PC-3 (cell line): ENCODE measurements at regions of chr17 and their contacts with region 1.

Region 1: DNA sequence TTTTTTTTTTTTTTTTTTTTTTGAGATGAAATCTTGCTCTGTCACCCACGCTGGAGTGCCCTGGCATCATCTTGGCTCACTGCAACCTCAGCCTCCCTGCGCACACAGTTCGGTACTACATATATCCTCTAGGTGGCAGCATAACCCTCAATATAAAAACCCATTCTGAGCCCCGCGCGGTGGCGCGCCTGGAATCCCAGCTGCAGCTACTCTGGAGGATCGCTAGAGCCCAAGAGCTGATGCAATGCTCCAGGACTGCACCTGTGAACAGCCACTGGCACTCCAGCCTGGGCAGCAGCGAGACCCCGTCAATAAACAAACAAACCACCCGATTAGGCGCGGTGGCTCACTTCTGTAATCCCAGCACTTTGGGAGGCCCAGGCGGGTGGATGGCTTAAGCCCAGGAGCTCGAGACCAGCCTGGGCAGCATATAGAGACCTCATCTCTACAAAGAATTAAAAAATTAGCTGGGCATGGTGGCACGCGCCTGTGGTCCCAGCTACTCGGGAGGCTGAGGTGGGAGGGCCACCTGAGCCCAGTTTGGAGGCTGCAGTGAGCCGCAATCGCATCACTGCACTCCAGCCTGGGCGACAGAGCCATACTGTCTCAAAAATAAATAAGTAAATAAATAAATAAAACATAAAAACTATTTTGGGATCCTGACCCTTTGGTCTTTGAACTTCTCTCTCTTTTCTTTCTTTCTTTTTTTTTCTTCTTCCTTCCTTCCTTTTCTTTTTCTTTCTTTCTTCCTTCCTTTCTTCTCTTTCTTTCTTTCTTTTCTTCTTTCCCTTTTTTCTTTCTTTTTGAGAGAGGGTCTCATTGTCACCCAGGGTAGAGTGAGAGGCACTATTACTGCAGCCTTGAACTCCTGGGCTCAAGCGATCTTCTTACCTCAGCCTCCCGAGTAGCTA is 15.4 kb upstream of the AKAP10 start:
- DNase-seq: peak; percentile 97
- ATAC-seq: peak; percentile 99
- H3K4me3 ChIP-seq: peak overlapping the region; percentile 65
- H3K27ac ChIP-seq: no peak overlapping the region
- H3K4me1 ChIP-seq: no peaks in the 10 kb centered on the region; the same call in 1 of the 2 replicates
- H3K27me3 ChIP-seq: no peaks in the 10 kb centered on the region
- CTCF ChIP-seq: peak; percentile 87

Region 2: DNA sequence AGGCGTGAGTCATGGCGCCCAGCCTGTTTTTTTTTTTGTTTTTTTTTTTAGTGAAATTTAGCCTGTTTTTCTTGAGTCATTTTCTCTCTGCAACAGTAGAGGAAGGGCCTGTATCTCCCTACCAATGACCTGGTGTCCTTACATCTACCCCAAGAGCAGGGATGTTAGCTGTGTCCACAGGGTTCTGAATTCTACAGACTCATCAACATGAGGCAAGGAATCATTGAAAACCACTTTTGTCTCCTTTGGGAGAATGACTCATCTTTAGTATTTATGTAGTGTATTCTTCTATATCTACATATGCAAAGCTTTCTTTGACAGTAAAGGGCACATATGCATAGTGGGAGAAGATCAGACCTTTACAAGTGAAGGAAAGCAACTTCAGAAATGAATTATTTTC is 121.4 kb after region 1 on chr17:
- CTCF ChIA-PET with region 1: interaction called, 11 read pairs
- POLR2A ChIA-PET with region 1: no interaction called
- intact Hi-C with region 1: loop called (anchors 1 kb)
- DNase-seq: peak; percentile 32
- ATAC-seq: no peak
- H3K4me3 ChIP-seq: no peak overlapping the region
- H3K27ac ChIP-seq: no peak overlapping the region
- H3K4me1 ChIP-seq: no peaks in the 10 kb centered on the region
- H3K27me3 ChIP-seq: no peaks in the 10 kb centered on the region
- CTCF ChIP-seq: no peak

Region 3: GRCh38 chr17:20121359-20122253 is 128.5 kb after region 1 on chr17:
- CTCF ChIA-PET with region 1: no interaction called
- POLR2A ChIA-PET with region 1: no interaction called
- intact Hi-C with region 1: loop called (anchors 1 kb)
- DNase-seq: peak; percentile 71
- ATAC-seq: peak; percentile 67
- H3K4me3 ChIP-seq: no peak overlapping the region
- H3K27ac ChIP-seq: no peak overlapping the region
- H3K4me1 ChIP-seq: peaks cover 5% of the 10 kb centered on the region; the same call in 1 of the 2 replicates
- H3K27me3 ChIP-seq: no peaks in the 10 kb centered on the region
- CTCF ChIP-seq: peak; percentile 98

Region 4: GRCh38 chr17:20226814-20227482 is 233.9 kb after region 1 on chr17:
- CTCF ChIA-PET with region 1: no interaction called
- POLR2A ChIA-PET with region 1: no interaction called
- intact Hi-C with region 1: loop called (anchors 2 kb)
- DNase-seq: peak; percentile 84
- ATAC-seq: peak; percentile 90
- H3K4me3 ChIP-seq: no peak overlapping the region
- H3K27ac ChIP-seq: no peak overlapping the region
- H3K4me1 ChIP-seq: peaks cover 6% of the 10 kb centered on the region; the same call in 1 of the 2 replicates
- H3K27me3 ChIP-seq: no peaks in the 10 kb centered on the region
- CTCF ChIP-seq: peak; percentile 94